Activated T-helper 2 cell treated with anti-CD3 and anti-CD28 coated beads, Interferon-gamma antibody, Interleukin-2, Interleukin-4, amounts not matched to agents 10 μg/mL and 5 μg/mL and 100 μg/mL, durations not matched to agents 14 hours and 24 hours and 36 hours (primary cell): ENCODE measurements at regions of chr20 and their contacts with region 1.

Region 1: GRCh38 chr20:10521068-10521831 is 86.1 kb downstream of the SLX4IP start:
- DNase-seq: no peak
- H3K4me3 Mint-ChIP-seq: peak overlapping the region; percentile 14
- H3K27ac Mint-ChIP-seq: peak overlapping the region; percentile 56
- H3K4me1 Mint-ChIP-seq: peaks cover 44% of the 10 kb centered on the region
- H3K27me3 Mint-ChIP-seq: no peaks in the 10 kb centered on the region

Region 2: GRCh38 chr20:10434832-10435812 is 86.1 kb before region 1 on chr20 and contains the start of gene SLX4IP:
- intact Hi-C with region 1: loop called (anchors 1 kb)
- DNase-seq: peak; percentile 78
- H3K4me3 Mint-ChIP-seq: peak within 1 kb of the TSS; percentile 97
- H3K27ac Mint-ChIP-seq: peak within 1 kb of the TSS; percentile 97
- H3K4me1 Mint-ChIP-seq: peaks cover 59% of the 10 kb centered on the region
- H3K27me3 Mint-ChIP-seq: no peaks in the 10 kb centered on the region
- total RNA-seq, gene SLX4IP: 6.3 and 6.4 TPM in 2 replicates

Region 3: DNA sequence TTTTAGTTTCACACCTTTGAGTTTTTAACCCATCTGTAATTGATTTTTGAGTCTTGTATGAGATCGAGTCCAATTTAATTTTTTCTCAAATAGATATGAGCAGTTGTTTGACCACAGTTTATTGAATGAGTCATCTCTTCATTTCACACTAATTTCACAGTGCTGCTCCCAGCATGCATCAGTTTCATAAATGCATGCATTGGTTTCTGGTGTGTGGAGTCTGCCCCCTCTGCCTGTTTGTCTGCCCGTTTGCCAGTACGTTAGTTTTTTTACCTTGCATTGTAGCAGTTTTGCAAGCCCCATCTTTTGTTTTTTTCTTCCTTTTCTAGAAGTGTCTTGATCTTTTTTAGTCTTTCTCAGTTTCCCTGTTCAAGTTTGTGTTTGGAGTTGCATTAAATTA is 74.2 kb before region 1 on chr20:
- intact Hi-C with region 1: loop called (anchors 1 kb)
- DNase-seq: peak; percentile 63
- H3K4me3 Mint-ChIP-seq: peak overlapping the region; percentile 72
- H3K27ac Mint-ChIP-seq: peak overlapping the region; percentile 87
- H3K4me1 Mint-ChIP-seq: peaks cover 36% of the 10 kb centered on the region
- H3K27me3 Mint-ChIP-seq: no peaks in the 10 kb centered on the region

Region 4: GRCh38 chr20:10461495-10461894 is 59.8 kb before region 1 on chr20:
- intact Hi-C with region 1: no loop called
- DNase-seq: no peak
- H3K4me3 Mint-ChIP-seq: no peak overlapping the region
- H3K27ac Mint-ChIP-seq: no peak overlapping the region
- H3K4me1 Mint-ChIP-seq: peaks cover 21% of the 10 kb centered on the region
- H3K27me3 Mint-ChIP-seq: no peaks in the 10 kb centered on the region

Region 5: DNA sequence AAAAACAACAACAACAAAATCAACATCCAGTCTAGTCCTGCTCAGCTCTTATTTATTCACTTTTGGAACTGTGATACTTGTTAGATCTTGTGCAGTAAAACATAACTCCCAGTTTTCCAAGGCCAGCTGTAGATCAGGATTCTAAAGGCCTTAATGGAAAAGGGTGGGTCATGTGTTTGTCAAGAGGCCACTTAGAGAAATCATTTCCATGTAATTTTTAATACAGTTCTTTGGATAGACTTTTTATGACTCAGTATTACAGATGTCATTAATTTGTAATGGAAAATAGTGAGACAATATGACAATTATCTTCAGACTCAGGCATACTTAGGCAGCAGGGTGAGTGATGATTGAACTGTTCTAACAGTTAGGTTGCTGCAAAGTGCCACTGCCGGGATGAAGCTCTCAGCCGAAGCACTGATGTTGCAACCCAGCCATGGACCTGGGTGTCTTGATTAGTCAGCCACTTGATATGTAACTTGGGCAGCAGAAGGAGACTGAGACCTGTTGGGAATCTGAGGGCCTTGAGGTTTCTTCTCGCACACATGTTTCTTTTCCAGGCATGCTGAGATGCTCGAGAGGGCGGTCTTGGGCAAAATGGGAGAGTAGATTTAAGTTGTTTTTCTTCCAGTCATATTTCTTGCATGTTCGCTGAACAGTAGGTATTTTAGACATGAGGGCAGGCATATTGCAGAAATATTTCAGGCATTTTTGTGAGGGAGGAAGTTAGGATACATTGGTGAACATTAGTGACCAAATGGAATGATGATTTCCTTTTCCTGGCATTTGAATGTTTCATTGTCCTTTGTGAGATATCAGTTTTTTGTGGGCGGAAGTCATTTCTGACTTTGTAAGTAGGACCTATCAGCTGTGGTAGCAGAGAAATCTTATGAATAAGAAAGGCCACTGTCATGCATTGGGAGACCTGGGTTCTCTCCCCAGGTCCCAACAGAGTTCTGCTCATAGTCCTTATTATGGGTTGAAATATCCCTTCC is 33.8 kb before region 1 on chr20:
- intact Hi-C with region 1: loop called (anchors 5 kb)
- DNase-seq: no peak
- H3K4me3 Mint-ChIP-seq: no peak overlapping the region
- H3K27ac Mint-ChIP-seq: no peak overlapping the region
- H3K4me1 Mint-ChIP-seq: peaks cover 24% of the 10 kb centered on the region
- H3K27me3 Mint-ChIP-seq: no peaks in the 10 kb centered on the region

Region 6: GRCh38 chr20:10502098-10502526 is 19.1 kb before region 1 on chr20:
- intact Hi-C with region 1: loop called (anchors 2 kb)
- DNase-seq: no peak
- H3K4me3 Mint-ChIP-seq: peak overlapping the region; percentile 78
- H3K27ac Mint-ChIP-seq: peak overlapping the region; percentile 87
- H3K4me1 Mint-ChIP-seq: peaks cover 50% of the 10 kb centered on the region
- H3K27me3 Mint-ChIP-seq: no peaks in the 10 kb centered on the region

Region 7: GRCh38 chr20:10553326-10553984 is 32.2 kb after region 1 on chr20:
- intact Hi-C with region 1: loop called (anchors 2 kb)
- DNase-seq: no peak
- H3K4me3 Mint-ChIP-seq: no peak overlapping the region
- H3K27ac Mint-ChIP-seq: no peak overlapping the region
- H3K4me1 Mint-ChIP-seq: peaks cover 43% of the 10 kb centered on the region
- H3K27me3 Mint-ChIP-seq: peaks cover 7% of the 10 kb centered on the region

Region 8: DNA sequence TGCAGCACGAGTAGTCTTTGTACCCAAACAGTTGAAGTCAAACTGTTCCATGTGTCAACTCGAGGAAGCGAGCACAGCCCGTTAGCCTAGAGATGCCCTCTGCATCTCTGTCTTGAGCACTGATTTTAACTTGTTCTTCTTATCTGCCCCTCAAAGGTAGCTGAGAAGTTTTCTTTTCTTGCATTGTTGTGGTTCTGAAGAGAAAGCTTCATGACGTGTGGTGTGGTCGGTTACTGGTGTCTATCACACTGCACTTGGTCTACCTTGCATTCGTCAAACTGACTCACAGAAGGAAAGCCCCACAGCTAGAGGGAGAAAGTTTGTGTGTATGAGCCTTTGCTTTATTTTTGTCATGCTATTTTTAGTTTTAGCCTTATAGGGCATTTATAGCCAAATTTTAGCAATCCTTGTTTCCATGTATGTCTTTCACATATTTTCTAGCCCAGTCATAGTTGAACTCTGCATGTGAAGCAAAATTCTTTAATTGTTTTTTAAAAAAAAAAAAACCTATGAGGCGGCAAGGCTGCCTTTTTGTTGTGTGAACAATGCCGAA is 37.5 kb after region 1 on chr20:
- intact Hi-C with region 1: loop called (anchors 2 kb)
- DNase-seq: peak; percentile 50
- H3K4me3 Mint-ChIP-seq: peak overlapping the region; percentile 17
- H3K27ac Mint-ChIP-seq: no peak overlapping the region
- H3K4me1 Mint-ChIP-seq: peaks cover 38% of the 10 kb centered on the region
- H3K27me3 Mint-ChIP-seq: peaks cover 7% of the 10 kb centered on the region

Region 9: DNA sequence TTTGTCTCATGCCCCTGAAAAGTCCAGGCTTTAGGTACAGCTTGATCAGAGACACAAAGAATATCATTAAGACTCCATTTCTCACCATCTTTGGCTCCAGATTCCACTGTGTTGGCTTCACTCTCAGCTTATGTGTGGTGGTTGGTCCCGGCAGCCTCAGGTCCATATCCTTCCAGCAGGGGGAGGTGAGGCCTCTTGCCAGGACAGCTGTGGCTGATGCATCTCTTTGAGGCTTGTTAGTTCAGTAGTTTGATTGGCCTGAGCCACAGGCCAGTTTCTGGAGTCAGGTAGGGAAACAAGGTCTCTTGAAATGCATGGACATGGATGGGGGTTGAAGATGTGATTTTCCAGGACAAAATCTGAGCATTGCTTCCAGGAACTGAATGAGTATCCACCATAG is 90.1 kb after region 1 on chr20:
- intact Hi-C with region 1: no loop called
- DNase-seq: no peak
- H3K4me3 Mint-ChIP-seq: no peak overlapping the region
- H3K27ac Mint-ChIP-seq: no peak overlapping the region
- H3K4me1 Mint-ChIP-seq: peaks cover 2% of the 10 kb centered on the region
- H3K27me3 Mint-ChIP-seq: no peaks in the 10 kb centered on the region